Calu3 (cell line): ENCODE measurements at regions of chr16 and their contacts with region 1.

Region 1: DNA sequence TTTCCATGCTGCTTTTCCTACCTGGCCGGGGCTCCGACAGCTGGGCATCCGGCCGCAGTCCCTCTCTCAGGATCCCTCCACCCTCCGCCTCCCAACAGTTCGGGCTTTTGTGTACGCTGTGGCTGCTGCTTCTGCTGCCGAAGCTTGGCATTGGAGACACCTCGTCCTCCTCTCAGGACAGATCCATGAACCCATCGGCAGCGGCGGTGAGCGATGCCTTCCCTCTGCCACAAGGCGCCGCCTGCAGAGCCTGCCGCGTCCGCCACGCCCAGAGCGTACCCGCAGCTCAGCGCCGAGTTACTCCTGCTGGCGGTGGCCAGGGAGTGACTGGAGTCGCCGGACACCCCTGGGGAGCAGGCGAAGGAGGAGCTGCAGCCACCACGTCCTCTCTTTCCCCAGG is 2032.8 kb downstream of the TP53TG3F start:
- DNase-seq: no peak
- H3K4me3 Mint-ChIP-seq: no peak overlapping the region
- H3K27ac Mint-ChIP-seq: no peak overlapping the region
- H3K4me1 Mint-ChIP-seq: no peaks in the 10 kb centered on the region
- H3K27me3 Mint-ChIP-seq: no peaks in the 10 kb centered on the region
- CTCF ChIP-seq: no peak

Region 2: GRCh38 chr16:35559911-35560636 is 67.8 kb after region 1 on chr16:
- CTCF ChIA-PET with region 1: no interaction called
- intact Hi-C with region 1: loop called (anchors 10 kb)
- DNase-seq: no peak
- H3K4me3 Mint-ChIP-seq: no peak overlapping the region
- H3K27ac Mint-ChIP-seq: no peak overlapping the region
- H3K4me1 Mint-ChIP-seq: no peaks in the 10 kb centered on the region
- H3K27me3 Mint-ChIP-seq: no peaks in the 10 kb centered on the region
- CTCF ChIP-seq: no peak